ENCODE measurements at regions of chr5 and their contacts with region 1.

Region 1: DNA sequence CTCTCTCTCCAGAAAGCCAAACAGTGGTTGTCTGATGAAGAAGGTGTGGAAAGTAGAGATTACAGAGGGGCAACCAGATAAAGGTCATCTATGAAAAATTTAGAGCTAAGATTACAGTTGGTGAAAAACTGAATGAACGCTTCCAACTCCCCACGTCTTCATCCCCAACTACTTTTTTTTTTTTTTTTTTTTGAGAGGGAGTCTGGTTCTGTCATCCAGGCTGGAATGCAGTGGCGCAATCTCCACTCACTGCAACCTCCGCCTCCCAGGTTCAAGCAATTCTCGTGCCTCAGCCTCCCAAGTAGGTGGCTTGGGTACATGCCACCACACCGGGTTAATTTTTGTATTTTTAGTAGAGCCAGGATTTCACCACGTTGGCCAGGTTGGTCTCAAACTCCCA is 64.3 kb downstream of the RAPGEF6 start:
- DNase-seq: no peak
- ATAC-seq: no peak
- H3K4me3 ChIP-seq: no peak overlapping the region
- H3K27ac ChIP-seq: no peak overlapping the region
- H3K4me1 ChIP-seq: no peaks in the 10 kb centered on the region
- H3K27me3 ChIP-seq: no peaks in the 10 kb centered on the region
- CTCF ChIP-seq: no peak
- EP300 ChIP-seq: no peak
- POLR2A ChIP-seq: no peak
- RAD21 ChIP-seq: no peak

Region 2: DNA sequence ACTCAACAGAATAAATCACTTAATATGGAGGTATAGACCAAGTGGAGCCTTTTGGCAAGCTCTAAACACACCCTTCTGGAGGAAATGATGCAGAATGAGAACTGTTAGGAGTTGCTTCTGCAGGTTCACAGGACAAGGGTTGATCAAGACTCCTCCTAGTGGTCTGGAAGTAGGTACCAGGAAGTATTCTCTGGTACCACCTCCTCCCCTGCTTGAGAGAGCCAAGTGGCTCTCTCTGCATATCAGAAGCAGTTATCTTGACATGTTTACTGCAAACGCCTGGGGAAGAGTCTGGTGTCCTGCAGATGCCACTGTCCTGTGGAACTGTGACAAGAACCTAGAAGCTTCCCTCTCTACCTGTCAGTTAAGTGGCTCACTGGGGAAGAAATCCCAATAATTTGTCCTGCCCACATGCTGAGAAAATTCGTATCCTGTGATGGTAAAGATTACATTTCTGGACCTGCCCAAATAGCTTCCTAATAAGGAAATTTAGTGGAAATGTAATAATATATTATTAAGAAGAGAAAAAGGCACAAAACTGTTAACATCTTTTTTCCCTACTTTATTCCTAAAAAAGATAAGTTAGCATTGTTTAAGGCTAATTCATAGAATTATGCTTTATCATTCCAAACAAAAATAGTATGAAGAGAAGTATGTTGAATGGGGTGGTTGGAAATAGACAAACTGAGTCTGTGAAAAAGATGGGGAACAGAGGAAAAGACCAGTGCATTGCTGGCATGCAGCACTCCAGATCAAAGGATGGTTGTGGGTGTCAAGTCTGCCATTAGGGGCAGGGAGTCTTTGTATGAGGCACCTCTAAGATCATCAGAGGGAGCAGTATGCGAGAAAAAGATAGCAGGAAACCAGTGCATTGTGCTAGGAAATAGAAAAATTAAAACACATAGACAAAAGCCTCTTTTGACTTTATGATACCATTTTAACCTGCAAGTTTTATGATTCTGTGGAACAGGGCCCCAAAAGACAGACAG is 188.1 kb before region 1 on chr5:
- CTCF ChIA-PET with region 1: no interaction called
- POLR2A ChIA-PET with region 1: no interaction called
- in situ Hi-C with region 1: no loop called
- intact Hi-C with region 1: no loop called
- DNase-seq: peak; percentile 66
- ATAC-seq: peak; percentile 74
- H3K4me3 ChIP-seq: no peak overlapping the region
- H3K27ac ChIP-seq: peak overlapping the region; percentile 7
- H3K4me1 ChIP-seq: peaks cover 76% of the 10 kb centered on the region
- H3K27me3 ChIP-seq: no peaks in the 10 kb centered on the region
- CTCF ChIP-seq: peak; percentile 69
- EP300 ChIP-seq: no peak
- POLR2A ChIP-seq: no peak
- RAD21 ChIP-seq: peak; percentile 57

Region 3: DNA sequence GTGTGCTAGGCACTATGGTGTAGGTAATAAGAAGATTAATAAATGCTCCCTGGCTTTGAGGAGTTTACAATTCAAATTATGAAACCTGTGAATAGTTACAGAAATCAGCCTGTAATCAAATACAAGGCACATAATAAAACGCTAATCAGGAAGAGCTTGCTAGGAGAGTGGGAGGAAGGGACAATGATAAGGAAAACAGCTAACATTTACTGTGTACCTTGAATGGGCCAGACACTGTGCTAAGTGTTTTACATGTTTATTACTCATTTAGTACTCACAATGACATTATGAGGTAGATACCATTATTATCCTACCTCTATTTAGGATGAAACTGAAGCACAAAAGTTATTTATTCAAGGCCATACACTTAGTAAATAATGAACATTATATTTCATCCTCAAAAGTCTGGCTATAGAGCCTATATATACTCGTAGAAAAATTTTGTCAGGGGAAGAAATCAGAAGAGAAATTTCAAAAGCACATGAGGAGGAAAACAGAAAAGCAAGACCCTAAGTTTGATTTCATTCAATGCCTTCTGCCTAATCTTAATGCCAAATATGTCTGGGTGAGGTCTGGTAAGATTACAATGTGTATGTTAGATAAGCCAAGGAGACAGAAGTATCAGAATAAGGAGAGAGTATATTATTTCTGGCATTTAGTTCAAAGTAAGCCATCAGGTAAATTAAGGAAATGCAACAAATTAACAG is 1356.7 kb after region 1 on chr5:
- CTCF ChIA-PET with region 1: no interaction called
- POLR2A ChIA-PET with region 1: no interaction called
- in situ Hi-C with region 1: no loop called
- intact Hi-C with region 1: loop called (anchors 5 kb)
- DNase-seq: no peak
- ATAC-seq: no peak
- H3K4me3 ChIP-seq: no peak overlapping the region
- H3K27ac ChIP-seq: no peak overlapping the region
- H3K4me1 ChIP-seq: peaks cover 14% of the 10 kb centered on the region; the same call in 1 of the 2 replicates
- H3K27me3 ChIP-seq: no peaks in the 10 kb centered on the region
- CTCF ChIP-seq: no peak
- EP300 ChIP-seq: no peak
- POLR2A ChIP-seq: no peak
- RAD21 ChIP-seq: no peak